Naive thymus-derived CD4-positive, alpha-beta T cell (primary cell): ENCODE measurements at regions of chr11 and their contacts with region 1.

Region 1: GRCh38 chr11:9460322-9461067 is at the start of gene ZNF143:
- DNase-seq: peak; percentile 95 to 100 (median 100)
- ATAC-seq: peak; percentile 92
- H3K4me3 ChIP-seq: peak within 1 kb of the TSS; percentile 93
- H3K4me3 Mint-ChIP-seq: peak within 1 kb of the TSS; percentile 84 to 98 (median 96)
- H3K27ac ChIP-seq: peak within 1 kb of the TSS; percentile 98
- H3K27ac Mint-ChIP-seq: peak within 1 kb of the TSS; percentile 97 to 99 (median 99)
- H3K4me1 ChIP-seq: peaks cover 9 to 19% of the 10 kb centered on the region in 2 donors
- H3K4me1 Mint-ChIP-seq: peaks cover 21 to 34% (median 26%) of the 10 kb centered on the region in 7 donors
- H3K27me3 ChIP-seq: no peaks in the 10 kb centered on the region
- H3K27me3 Mint-ChIP-seq: no peaks in the 10 kb centered on the region
- total RNA-seq, gene ZNF143: 29.6 to 47.5 (median 34.4) TPM

Region 2: DNA sequence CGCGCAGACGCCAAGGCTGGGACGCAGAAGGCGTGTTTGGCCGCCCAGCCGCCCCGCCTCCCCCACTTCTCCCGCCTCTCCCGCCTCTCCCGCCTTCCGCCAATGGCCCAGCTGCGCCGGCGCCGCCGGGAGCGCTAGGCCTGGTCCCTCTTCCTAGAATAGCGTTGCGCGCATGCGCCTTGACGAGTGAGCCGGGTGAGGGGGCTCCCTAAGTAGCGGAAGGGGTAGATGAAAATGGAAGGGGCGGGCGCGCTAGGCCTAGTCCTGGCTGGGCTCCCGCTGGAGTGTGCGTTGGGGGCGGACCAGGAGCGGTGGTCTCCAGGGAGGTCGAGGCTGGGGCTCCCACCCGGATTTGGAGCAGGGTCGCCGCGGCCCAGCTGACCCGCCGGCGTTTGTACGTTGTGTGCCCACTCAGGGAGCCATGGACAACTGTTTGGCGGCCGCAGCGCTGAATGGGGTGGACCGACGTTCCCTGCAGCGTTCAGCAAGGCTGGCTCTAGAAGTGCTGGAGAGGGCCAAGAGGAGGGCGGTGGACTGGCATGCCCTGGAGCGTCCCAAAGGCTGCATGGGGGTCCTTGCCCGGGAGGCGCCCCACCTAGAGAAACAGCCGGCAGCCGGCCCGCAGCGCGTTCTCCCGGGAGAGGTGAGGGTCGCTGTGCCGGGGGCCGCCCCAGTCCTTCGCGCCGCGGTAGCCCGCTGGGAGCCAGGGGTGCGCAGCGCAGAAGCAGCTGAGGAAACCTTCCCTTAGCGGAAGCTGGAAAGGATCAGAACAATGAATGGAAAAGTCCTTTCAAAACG is 549.3 kb before region 1 on chr11 and contains the start of gene AKIP1:
- CTCF ChIA-PET with region 1: no interaction called
- POLR2A ChIA-PET with region 1: no interaction called
- intact Hi-C with region 1: loop called (anchors 1 to 5 kb)
- DNase-seq: peak; percentile 48 to 87 (median 61)
- ATAC-seq: peak; percentile 75
- H3K4me3 ChIP-seq: peak within 1 kb of the TSS; percentile 79
- H3K4me3 Mint-ChIP-seq: peak within 1 kb of the TSS; percentile 86 to 95 (median 92)
- H3K27ac ChIP-seq: peak within 1 kb of the TSS; percentile 71
- H3K27ac Mint-ChIP-seq: peak within 1 kb of the TSS; percentile 58 to 91 (median 78)
- H3K4me1 ChIP-seq: peaks cover 0 to 4% of the 10 kb centered on the region in 2 donors
- H3K4me1 Mint-ChIP-seq: peaks cover 26 to 51% (median 41%) of the 10 kb centered on the region in 7 donors
- H3K27me3 ChIP-seq: no peaks in the 10 kb centered on the region
- H3K27me3 Mint-ChIP-seq: peaks cover 0 to 24% (median 0%) of the 10 kb centered on the region in 5 donors
- total RNA-seq, gene AKIP1: 5.6 to 20.9 (median 11.2) TPM

Region 3: GRCh38 chr11:9203691-9204311 is 256.7 kb before region 1 on chr11:
- CTCF ChIA-PET with region 1: no interaction called
- POLR2A ChIA-PET with region 1: interaction called, 5 read pairs
- intact Hi-C with region 1: loop called in 1 of 2 experiments (anchors 2 kb)
- DNase-seq: peak in 7 of 9 donors; percentile 13 to 50 (median 24)
- ATAC-seq: peak; percentile 61
- H3K4me3 ChIP-seq: no peak overlapping the region
- H3K4me3 Mint-ChIP-seq: no peak overlapping the region
- H3K27ac ChIP-seq: no peak overlapping the region
- H3K27ac Mint-ChIP-seq: peak overlapping the region in 2 of 9 donors; percentile 9 to 50
- H3K4me1 ChIP-seq: no peaks in the 10 kb centered on the region
- H3K4me1 Mint-ChIP-seq: peaks cover 15 to 55% (median 26%) of the 10 kb centered on the region in 7 donors
- H3K27me3 ChIP-seq: no peaks in the 10 kb centered on the region
- H3K27me3 Mint-ChIP-seq: no peaks in the 10 kb centered on the region

Region 4: DNA sequence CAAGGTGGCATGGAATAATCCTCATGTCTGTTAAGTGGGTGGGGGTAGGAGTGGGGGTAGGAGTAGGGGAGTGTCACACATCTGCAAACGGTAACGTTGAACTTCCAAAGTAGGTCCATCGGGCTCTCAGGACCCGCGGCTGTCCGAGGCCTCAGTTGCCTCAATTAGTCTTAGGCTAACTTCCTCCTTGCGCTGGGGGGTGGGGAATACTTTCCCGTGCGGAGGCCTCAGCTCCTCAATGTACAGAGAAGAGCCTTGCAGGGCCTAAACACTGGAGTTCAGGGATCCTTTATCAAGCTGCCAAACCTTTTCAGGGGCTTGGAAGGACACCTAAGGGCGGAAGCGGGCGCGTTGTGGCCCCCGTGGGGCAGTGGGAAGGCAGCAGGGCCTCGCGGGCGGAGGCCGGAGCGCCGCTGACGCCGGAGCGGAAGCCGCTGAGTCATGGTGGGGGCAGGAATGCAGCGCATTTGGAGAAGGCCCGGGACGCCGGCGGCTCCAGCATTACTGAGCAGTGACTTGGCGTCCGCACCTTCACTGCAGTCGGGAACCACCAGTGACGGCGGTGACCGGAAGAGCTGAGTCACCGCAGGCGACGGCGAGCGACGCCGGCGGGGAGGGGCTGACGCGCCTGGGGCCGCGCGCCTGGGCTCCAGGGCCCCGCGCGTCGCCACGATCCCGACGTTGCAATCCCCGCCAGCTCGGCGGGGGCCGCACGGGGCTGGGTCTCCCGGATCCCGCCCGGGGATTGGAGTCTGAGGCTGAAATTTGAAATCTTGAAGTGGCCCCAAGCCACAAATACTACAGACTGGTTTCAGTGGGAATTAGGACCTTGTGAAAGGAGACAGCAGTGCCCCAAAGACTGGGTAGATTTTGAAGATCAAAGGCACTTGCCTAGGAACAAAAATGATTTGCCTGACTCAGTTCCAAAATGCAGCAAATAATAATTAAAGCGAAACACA is 96.3 kb before region 1 on chr11:
- CTCF ChIA-PET with region 1: no interaction called
- POLR2A ChIA-PET with region 1: interaction called, 5 read pairs
- intact Hi-C with region 1: loop called (anchors 1 kb)
- DNase-seq: peak; percentile 38 to 82 (median 66)
- ATAC-seq: peak; percentile 95
- H3K4me3 ChIP-seq: peak overlapping the region; percentile 85
- H3K4me3 Mint-ChIP-seq: peak overlapping the region; percentile 78 to 89 (median 84)
- H3K27ac ChIP-seq: peak overlapping the region; percentile 73
- H3K27ac Mint-ChIP-seq: peak overlapping the region; percentile 78 to 94 (median 90)
- H3K4me1 ChIP-seq: peaks cover 2 to 5% of the 10 kb centered on the region in 2 donors
- H3K4me1 Mint-ChIP-seq: peaks cover 0 to 30% (median 14%) of the 10 kb centered on the region in 7 donors
- H3K27me3 ChIP-seq: no peaks in the 10 kb centered on the region
- H3K27me3 Mint-ChIP-seq: no peaks in the 10 kb centered on the region

Region 5: GRCh38 chr11:9506489-9507276 is 46.2 kb after region 1 on chr11:
- CTCF ChIA-PET with region 1: no interaction called
- POLR2A ChIA-PET with region 1: interaction called, 10 read pairs
- intact Hi-C with region 1: loop called in 1 of 2 experiments (anchors 1 kb)
- DNase-seq: peak; percentile 48 to 74 (median 66)
- ATAC-seq: peak; percentile 92
- H3K4me3 ChIP-seq: no peak overlapping the region
- H3K4me3 Mint-ChIP-seq: no peak overlapping the region
- H3K27ac ChIP-seq: no peak overlapping the region
- H3K27ac Mint-ChIP-seq: peak overlapping the region in 2 of 9 donors; percentile 35 to 52
- H3K4me1 ChIP-seq: no peaks in the 10 kb centered on the region
- H3K4me1 Mint-ChIP-seq: peaks cover 0 to 13% (median 6%) of the 10 kb centered on the region in 7 donors
- H3K27me3 ChIP-seq: no peaks in the 10 kb centered on the region
- H3K27me3 Mint-ChIP-seq: no peaks in the 10 kb centered on the region

Region 6: GRCh38 chr11:10293423-10294289 is 833.2 kb after region 1 on chr11 and contains the start of gene SBF2:
- CTCF ChIA-PET with region 1: no interaction called
- POLR2A ChIA-PET with region 1: no interaction called
- intact Hi-C with region 1: loop called in 1 of 2 experiments (anchors 2 kb)
- DNase-seq: peak; percentile 62 to 83 (median 77)
- ATAC-seq: peak; percentile 71
- H3K4me3 ChIP-seq: peak within 1 kb of the TSS; percentile 73
- H3K4me3 Mint-ChIP-seq: peak within 1 kb of the TSS; percentile 82 to 92 (median 88)
- H3K27ac ChIP-seq: peak within 1 kb of the TSS; percentile 48
- H3K27ac Mint-ChIP-seq: peak within 1 kb of the TSS in 8 of 9 donors; percentile 10 to 83 (median 59)
- H3K4me1 ChIP-seq: peaks cover 16 to 29% of the 10 kb centered on the region in 2 donors
- H3K4me1 Mint-ChIP-seq: peaks cover 28 to 44% (median 37%) of the 10 kb centered on the region in 7 donors
- H3K27me3 ChIP-seq: peaks cover 0 to 2% of the 10 kb centered on the region in 2 donors
- H3K27me3 Mint-ChIP-seq: peaks cover 15 to 55% (median 26%) of the 10 kb centered on the region in 5 donors
- total RNA-seq, gene SBF2: 8.5 to 35.2 (median 16.1) TPM

Region 7: GRCh38 chr11:10857709-10858438 is 1397.4 kb after region 1 on chr11 and contains the start of gene ZBED5:
- CTCF ChIA-PET with region 1: no interaction called
- POLR2A ChIA-PET with region 1: interaction called, 3 read pairs
- intact Hi-C with region 1: loop called in 1 of 2 experiments (anchors 1 kb)
- DNase-seq: peak; percentile 93 to 97 (median 96)
- ATAC-seq: peak; percentile 94
- H3K4me3 ChIP-seq: peak within 1 kb of the TSS; percentile 91
- H3K4me3 Mint-ChIP-seq: peak within 1 kb of the TSS; percentile 94 to 100 (median 99)
- H3K27ac ChIP-seq: peak within 1 kb of the TSS; percentile 91
- H3K27ac Mint-ChIP-seq: peak within 1 kb of the TSS; percentile 98 to 100 (median 100)
- H3K4me1 ChIP-seq: peaks cover 5 to 9% of the 10 kb centered on the region in 2 donors
- H3K4me1 Mint-ChIP-seq: peaks cover 20 to 73% (median 60%) of the 10 kb centered on the region in 7 donors
- H3K27me3 ChIP-seq: no peaks in the 10 kb centered on the region
- H3K27me3 Mint-ChIP-seq: peaks cover 0 to 2% (median 0%) of the 10 kb centered on the region in 5 donors
- total RNA-seq, gene ZBED5: 56.7 to 146 (median 94.0) TPM